Colonic mucosa (tissue), 4 donors: ENCODE measurements at regions of chr15 and their contacts with region 1.

Region 1: GRCh38 chr15:86624261-86625036 is 544.8 kb downstream of the AGBL1 start:
- DNase-seq: peak; percentile 84
- H3K4me3 ChIP-seq: no peak overlapping the region
- H3K27ac ChIP-seq: no peak overlapping the region
- H3K4me1 ChIP-seq: no peaks in the 10 kb centered on the region
- H3K27me3 ChIP-seq: no peaks in the 10 kb centered on the region
- CTCF ChIP-seq: peak; percentile 43

Region 2: GRCh38 chr15:85865070-85865684 is 759.3 kb before region 1 on chr15:
- intact Hi-C with region 1: loop called (anchors 10 kb)
- DNase-seq: no peak
- H3K4me3 ChIP-seq: no peak overlapping the region
- H3K27ac ChIP-seq: no peak overlapping the region
- H3K4me1 ChIP-seq: no peaks in the 10 kb centered on the region
- H3K27me3 ChIP-seq: no peaks in the 10 kb centered on the region
- CTCF ChIP-seq: peak; percentile 30

Region 3: GRCh38 chr15:86444527-86444926 is 179.9 kb before region 1 on chr15:
- intact Hi-C with region 1: no loop called
- DNase-seq: no peak
- H3K4me3 ChIP-seq: no peak overlapping the region
- H3K27ac ChIP-seq: no peak overlapping the region
- H3K4me1 ChIP-seq: no peaks in the 10 kb centered on the region
- H3K27me3 ChIP-seq: no peaks in the 10 kb centered on the region
- CTCF ChIP-seq: no peak

Region 4: DNA sequence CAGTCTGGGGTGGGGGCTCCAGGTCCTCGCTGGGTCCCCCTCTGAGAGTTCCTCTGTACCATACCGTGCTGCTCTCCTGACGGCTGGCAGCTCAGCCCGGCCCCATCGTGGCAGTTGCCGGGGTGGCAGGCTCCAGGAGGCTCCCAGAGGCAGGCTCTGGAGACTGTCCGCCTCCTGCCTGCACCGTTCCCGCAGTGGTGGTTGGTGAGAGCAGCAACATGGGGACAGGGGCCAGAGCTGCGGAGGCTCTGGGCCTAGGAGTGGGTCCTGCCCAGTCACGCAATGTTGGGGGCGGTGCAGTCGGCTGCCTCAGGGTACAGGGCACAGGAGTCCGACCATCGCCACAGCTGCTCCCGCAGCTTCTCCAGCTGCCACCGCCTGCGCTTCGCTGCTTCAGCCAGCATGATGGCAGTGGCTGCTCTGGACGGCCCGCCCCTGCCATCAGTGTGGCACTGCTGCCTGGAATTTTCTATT is 52.0 kb before region 1 on chr15:
- intact Hi-C with region 1: no loop called
- DNase-seq: no peak
- H3K4me3 ChIP-seq: no peak overlapping the region
- H3K27ac ChIP-seq: no peak overlapping the region
- H3K4me1 ChIP-seq: no peaks in the 10 kb centered on the region
- H3K27me3 ChIP-seq: no peaks in the 10 kb centered on the region
- CTCF ChIP-seq: no peak

Region 5: DNA sequence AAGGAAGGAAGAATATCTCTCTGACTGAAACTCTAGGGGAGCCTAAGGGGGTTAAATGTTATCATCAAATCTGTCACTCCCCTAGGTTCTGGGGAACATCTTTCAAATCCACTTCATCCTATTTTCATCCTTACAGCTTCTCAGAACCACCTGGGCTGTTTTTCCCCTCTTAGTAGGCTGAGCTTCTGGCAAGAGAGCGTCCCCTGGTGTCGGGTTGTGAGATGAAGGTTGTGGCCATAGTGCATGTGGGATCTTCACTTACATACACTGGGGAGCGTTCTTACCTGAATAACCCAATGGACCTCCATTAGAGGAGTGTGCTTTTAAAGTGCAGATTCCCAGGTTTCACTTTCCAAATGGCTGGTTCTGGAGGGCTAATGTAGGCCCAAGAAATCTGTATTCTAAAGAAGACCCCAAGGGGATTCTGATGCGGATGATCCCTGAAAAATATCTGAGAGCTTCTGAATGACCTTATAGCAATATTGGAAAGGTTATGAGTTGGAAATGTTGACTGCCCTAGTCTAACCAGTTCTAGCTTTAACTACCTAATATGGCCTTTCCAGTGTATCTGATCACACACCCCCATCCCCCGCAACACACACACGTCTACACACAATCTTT is 118.9 kb after region 1 on chr15:
- intact Hi-C with region 1: loop called (anchors 2 kb)
- DNase-seq: peak; percentile 65
- H3K4me3 ChIP-seq: no peak overlapping the region
- H3K27ac ChIP-seq: no peak overlapping the region
- H3K4me1 ChIP-seq: no peaks in the 10 kb centered on the region
- H3K27me3 ChIP-seq: no peaks in the 10 kb centered on the region
- CTCF ChIP-seq: peak; percentile 58

Region 6: DNA sequence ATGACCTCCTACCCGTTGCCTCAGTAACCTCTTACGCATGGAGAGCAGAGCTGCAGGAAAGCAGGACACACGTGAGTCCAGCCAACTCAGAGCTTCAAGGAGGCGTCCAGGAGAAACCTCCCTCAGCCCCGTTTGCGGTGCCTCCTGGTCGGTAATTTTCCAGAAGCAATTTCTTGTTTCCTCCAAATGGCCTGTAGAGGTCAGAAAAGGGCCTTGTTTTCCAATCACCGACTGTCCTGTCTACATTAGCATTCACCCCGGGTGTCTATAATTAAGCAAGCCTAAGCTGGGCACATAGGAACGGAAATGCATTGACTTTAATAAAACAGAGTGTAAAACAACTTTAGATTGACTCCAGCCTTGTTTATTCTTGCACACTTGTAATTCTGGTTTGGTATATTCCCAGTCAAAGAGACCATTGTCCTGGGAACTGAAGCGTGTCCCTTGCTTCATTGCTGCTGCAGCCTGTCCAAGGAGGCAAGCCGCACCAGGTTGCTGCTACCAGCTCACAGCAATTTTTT is 291.4 kb after region 1 on chr15:
- intact Hi-C with region 1: no loop called
- DNase-seq: no peak
- H3K4me3 ChIP-seq: no peak overlapping the region
- H3K27ac ChIP-seq: no peak overlapping the region
- H3K4me1 ChIP-seq: no peaks in the 10 kb centered on the region
- H3K27me3 ChIP-seq: no peaks in the 10 kb centered on the region
- CTCF ChIP-seq: no peak

Region 7: GRCh38 chr15:88246666-88247446 is 1622.4 kb after region 1 on chr15:
- intact Hi-C with region 1: loop called (anchors 10 kb)
- DNase-seq: peak; percentile 63
- H3K4me3 ChIP-seq: no peak overlapping the region
- H3K27ac ChIP-seq: no peak overlapping the region
- H3K4me1 ChIP-seq: no peaks in the 10 kb centered on the region
- H3K27me3 ChIP-seq: no peaks in the 10 kb centered on the region
- CTCF ChIP-seq: peak; percentile 95